Activated B cell treated with CpG ODN at 0.5 μM for 24 hours (primary cell): ENCODE measurements at regions of chr3 and their contacts with region 1.

Region 1: DNA sequence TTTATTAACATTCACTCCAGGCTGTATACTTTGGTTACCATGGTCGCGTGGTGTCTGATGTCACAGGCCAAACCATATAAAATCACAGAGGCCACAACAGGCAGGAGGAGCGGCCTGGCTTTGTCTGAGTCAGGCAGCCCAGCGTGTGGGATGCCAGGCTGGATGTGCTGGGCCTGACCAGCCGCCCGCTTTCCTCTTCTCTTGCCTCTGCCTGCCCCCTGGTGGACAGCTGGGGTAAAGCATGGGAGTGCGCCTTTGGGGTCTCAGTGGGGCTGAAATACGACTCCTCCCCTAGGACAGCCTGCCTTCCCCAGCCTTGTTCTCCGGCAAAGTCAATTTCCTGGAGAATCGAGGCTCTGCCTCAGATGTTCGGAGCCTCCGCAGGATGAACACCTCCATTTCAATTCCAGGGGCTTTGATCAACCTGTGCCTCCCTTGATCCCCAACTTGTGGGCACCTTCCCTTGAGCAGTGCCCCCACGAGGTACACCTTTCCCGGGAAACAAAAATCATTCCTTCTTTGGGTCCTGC is 78.2 kb downstream of the CCNL1 start:
- DNase-seq: peak; percentile 86
- ATAC-seq: peak; percentile 99
- H3K4me3 Mint-ChIP-seq: no peak overlapping the region
- H3K27ac Mint-ChIP-seq: peak overlapping the region; percentile 63
- H3K4me1 Mint-ChIP-seq: peaks cover 10% of the 10 kb centered on the region
- H3K27me3 Mint-ChIP-seq: no peaks in the 10 kb centered on the region
- CTCF ChIP-seq: peak; percentile 88

Region 2: GRCh38 chr3:156341831-156342416 is 739.8 kb before region 1 on chr3:
- CTCF ChIA-PET with region 1: no interaction called
- POLR2A ChIA-PET with region 1: no interaction called
- intact Hi-C with region 1: loop called (anchors 10 kb)
- DNase-seq: no peak
- ATAC-seq: peak; percentile 94
- H3K4me3 Mint-ChIP-seq: no peak overlapping the region
- H3K27ac Mint-ChIP-seq: no peak overlapping the region
- H3K4me1 Mint-ChIP-seq: peaks cover 6% of the 10 kb centered on the region
- H3K27me3 Mint-ChIP-seq: peaks cover 32% of the 10 kb centered on the region
- CTCF ChIP-seq: no peak

Region 3: DNA sequence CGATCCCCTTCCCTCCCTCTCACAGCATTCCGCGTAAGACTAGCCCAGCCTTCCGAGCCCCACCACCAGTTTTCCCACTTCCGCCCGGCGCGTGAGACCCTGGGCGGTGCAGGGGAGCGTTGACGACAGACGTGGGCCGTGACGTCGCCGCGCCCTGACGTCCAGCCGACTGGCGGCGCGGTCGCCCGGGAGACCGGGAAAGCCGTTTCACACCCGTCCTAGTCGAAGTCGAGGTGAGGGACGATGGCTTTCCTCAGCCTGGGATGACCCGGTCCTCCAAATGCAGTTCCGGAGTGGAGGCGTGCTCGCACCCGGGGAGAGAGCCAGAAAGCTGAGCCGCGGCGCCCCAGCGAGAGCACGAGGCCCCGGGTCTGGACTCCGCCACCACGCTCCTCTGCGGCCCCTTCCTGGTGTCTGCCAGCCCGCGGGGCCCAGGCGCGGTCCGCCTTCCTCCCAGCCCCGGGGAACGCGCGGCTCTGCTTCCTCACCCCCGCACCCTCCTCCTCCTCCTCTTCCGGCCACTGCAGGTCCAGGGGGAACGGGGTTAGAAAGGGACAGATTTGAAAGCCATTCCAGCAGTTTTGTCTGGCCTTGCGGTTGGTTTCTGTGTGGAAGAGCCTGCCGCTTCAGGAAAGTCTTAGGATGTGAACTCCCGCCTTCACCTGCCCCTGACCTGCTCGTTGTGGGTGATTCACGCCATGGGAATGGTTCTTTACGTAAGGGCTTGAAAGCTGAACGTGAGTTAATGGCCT is 255.4 kb before region 1 on chr3 and contains the start of gene LEKR1:
- CTCF ChIA-PET with region 1: no interaction called
- POLR2A ChIA-PET with region 1: no interaction called
- intact Hi-C with region 1: loop called (anchors 1 kb)
- DNase-seq: peak; percentile 74
- ATAC-seq: peak; percentile 73
- H3K4me3 Mint-ChIP-seq: peak within 1 kb of the TSS; percentile 90
- H3K27ac Mint-ChIP-seq: peak within 1 kb of the TSS; percentile 96
- H3K4me1 Mint-ChIP-seq: peaks cover 21% of the 10 kb centered on the region
- H3K27me3 Mint-ChIP-seq: no peaks in the 10 kb centered on the region
- CTCF ChIP-seq: no peak
- total RNA-seq, gene LEKR1: 2.8 and 2.9 TPM in 2 replicates

Region 4: GRCh38 chr3:156978481-156978961 is 103.2 kb before region 1 on chr3:
- CTCF ChIA-PET with region 1: interaction called, 5 read pairs
- POLR2A ChIA-PET with region 1: no interaction called
- intact Hi-C with region 1: loop called (anchors 2 kb)
- DNase-seq: no peak
- ATAC-seq: peak; percentile 90
- H3K4me3 Mint-ChIP-seq: peak overlapping the region; percentile 61
- H3K27ac Mint-ChIP-seq: peak overlapping the region; percentile 95
- H3K4me1 Mint-ChIP-seq: peaks cover 51% of the 10 kb centered on the region
- H3K27me3 Mint-ChIP-seq: no peaks in the 10 kb centered on the region
- CTCF ChIP-seq: no peak

Region 5: GRCh38 chr3:157136647-157137387 is 55.1 kb after region 1 on chr3:
- CTCF ChIA-PET with region 1: interaction called, 26 read pairs
- POLR2A ChIA-PET with region 1: interaction called, 3 read pairs
- intact Hi-C with region 1: loop called (anchors 1 kb)
- DNase-seq: no peak
- ATAC-seq: no peak
- H3K4me3 Mint-ChIP-seq: no peak overlapping the region
- H3K27ac Mint-ChIP-seq: no peak overlapping the region
- H3K4me1 Mint-ChIP-seq: peaks cover 5% of the 10 kb centered on the region
- H3K27me3 Mint-ChIP-seq: no peaks in the 10 kb centered on the region
- CTCF ChIP-seq: no peak

Region 6: GRCh38 chr3:158950178-158950901 is 1868.6 kb after region 1 on chr3:
- CTCF ChIA-PET with region 1: no interaction called
- POLR2A ChIA-PET with region 1: no interaction called
- intact Hi-C with region 1: no loop called
- DNase-seq: no peak
- ATAC-seq: no peak
- H3K4me3 Mint-ChIP-seq: no peak overlapping the region
- H3K27ac Mint-ChIP-seq: no peak overlapping the region
- H3K4me1 Mint-ChIP-seq: no peaks in the 10 kb centered on the region
- H3K27me3 Mint-ChIP-seq: no peaks in the 10 kb centered on the region
- CTCF ChIP-seq: no peak